ENCODE measurements at regions of chr19 and their contacts with region 1.

Region 1: DNA sequence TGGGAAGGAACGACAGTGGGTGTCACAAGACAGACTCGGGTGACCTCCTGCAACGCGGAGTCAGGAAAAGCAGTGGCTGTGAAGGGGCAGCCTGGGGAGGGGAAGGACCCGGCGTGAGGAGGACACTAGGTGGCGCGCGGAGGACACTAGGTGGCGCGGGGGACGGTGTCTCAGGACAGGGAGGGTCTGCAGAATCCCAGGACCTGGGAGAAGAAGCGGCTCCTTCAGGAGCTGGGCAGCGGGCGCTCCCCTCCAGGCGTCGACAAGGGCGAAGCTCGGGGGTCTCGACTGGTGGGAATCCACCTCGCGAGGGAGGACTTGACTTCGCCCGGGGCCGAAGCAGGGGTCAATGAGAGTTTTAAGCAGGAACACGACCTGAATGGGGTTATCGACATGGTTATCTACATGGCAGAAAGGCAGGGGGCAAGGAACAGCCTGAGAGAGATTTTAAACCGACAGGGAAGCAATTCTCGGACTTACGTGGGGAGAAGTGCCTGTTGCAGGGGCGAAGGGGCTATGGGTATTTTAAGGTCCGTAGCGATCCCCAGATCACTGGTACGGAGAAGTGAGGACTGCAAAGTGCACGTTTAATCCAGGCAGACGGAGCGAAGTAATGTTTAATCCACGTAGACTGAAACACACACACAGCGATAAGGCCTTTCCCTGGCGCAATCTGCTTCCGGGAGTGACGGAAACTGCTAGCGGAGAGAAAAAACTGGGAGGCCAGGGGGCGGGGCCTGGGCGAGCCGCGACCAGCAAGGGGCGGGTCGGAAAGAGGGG is at the start of gene ZNF616:
- DNase-seq: peak; percentile 97
- H3K4me3 ChIP-seq: peak within 1 kb of the TSS; percentile 62 to 75
- H3K27ac ChIP-seq: peak within 1 kb of the TSS; percentile 86 to 92
- H3K4me1 ChIP-seq: peaks cover 8% of the 10 kb centered on the region
- H3K27me3 ChIP-seq: no peaks in the 10 kb centered on the region
- CTCF ChIP-seq: peak; percentile 66 to 93 (median 81)
- POLR2A ChIP-seq: peak; percentile 85
- total RNA-seq, gene ZNF616: 9.1 to 13.7 TPM

Region 2: GRCh38 chr19:51777570-51778462 is 361.6 kb before region 1 on chr19:
- intact Hi-C with region 1: no loop called
- DNase-seq: peak; percentile 62
- H3K4me3 ChIP-seq: no peak overlapping the region
- H3K27ac ChIP-seq: no peak overlapping the region
- H3K4me1 ChIP-seq: no peaks in the 10 kb centered on the region
- H3K27me3 ChIP-seq: no peaks in the 10 kb centered on the region
- CTCF ChIP-seq: peak; percentile 33 to 75 (median 63)
- POLR2A ChIP-seq: no peak

Region 3: DNA sequence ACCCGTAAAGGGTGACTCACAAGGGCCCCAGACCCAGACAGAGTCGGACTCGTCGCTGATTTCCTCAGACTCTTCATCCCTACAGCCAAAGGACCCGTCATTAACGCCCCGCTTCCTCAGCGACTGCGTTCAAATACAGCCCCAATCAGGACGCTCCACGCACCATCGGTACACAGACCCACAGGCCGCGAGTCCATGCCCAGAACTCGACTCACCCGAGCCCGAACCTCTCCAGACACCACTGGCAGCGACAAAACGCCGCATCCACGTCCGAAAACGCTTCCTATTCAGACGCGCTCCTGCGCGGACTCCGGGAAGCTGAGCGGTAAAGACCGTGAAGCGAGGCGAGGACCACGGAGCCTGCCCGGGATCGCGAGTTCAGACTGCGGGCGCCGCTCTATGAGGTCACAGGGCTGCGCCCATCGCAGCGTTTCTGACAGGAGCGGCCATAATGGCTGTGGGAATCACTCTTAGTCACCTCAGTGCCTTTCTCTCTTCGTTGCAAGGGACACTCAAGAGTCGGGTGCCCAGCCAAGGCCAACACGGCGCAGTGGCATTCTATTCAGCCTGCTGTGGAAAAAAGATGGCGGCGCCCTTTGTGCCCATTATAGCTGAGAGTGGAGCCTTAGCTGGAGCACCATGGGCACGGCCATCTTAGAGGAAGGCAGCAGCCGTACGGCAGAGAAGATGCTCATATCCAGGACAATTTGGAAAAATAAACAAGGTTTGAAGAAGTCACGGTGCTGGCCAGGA is 111.2 kb before region 1 on chr19 and contains the start of gene ZNF614:
- intact Hi-C with region 1: no loop called
- DNase-seq: peak; percentile 85
- H3K4me3 ChIP-seq: peak within 1 kb of the TSS; percentile 69 to 73
- H3K27ac ChIP-seq: peak within 1 kb of the TSS; percentile 91 to 97
- H3K4me1 ChIP-seq: no peaks in the 10 kb centered on the region
- H3K27me3 ChIP-seq: no peaks in the 10 kb centered on the region
- CTCF ChIP-seq: no peak
- POLR2A ChIP-seq: peak; percentile 27
- total RNA-seq, gene ZNF614: 12.7 to 15.4 TPM

Region 4: DNA sequence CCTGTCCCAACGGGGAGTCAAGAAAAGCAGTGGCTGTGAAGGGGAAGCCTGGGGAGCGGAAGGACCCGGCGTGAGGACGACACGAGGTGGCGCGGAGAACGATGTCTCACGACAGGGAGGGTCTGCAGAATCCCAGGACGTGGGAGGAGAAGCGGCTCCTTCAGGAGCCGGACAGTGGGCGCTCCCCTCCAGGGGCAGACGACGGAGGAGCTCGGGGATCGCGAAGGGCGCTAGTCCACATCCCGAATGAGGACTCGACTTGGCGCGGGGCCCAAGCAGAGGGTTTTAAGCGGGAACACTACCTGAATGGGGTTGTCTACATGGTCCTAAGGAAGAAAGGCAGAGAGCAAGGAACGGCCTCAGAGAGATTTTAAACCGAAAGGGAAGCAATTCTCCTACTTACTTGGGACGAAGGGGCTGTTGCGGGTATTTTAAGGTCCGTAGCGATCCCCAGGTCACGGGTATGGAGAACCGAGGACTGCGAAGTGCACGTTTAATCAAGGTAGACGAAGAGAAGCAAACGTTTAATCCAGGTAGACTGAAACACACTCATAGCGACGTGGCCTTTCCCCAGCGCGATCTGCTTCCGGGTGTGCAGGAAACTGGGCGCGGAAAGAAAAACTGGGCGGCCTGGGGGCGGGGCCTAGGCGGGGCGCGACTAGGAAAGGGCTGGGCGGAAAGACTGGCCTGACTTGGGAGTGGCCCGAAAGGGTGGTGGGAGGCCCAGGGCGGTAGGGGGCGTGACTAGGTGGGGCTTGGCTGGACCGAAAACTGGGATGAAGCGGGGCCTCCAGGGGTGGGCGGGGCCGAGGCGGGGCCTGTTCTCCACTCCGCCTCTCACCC is 44.0 kb before region 1 on chr19 and contains the start of gene ZNF841:
- intact Hi-C with region 1: loop called (anchors 5 kb)
- DNase-seq: peak; percentile 90
- H3K4me3 ChIP-seq: peak within 1 kb of the TSS; percentile 65 to 73
- H3K27ac ChIP-seq: peak within 1 kb of the TSS; percentile 66 to 72
- H3K4me1 ChIP-seq: no peaks in the 10 kb centered on the region
- H3K27me3 ChIP-seq: no peaks in the 10 kb centered on the region
- CTCF ChIP-seq: no peak
- POLR2A ChIP-seq: peak; percentile 59
- total RNA-seq, gene ZNF841: 24.6 to 34.3 TPM

Region 5: DNA sequence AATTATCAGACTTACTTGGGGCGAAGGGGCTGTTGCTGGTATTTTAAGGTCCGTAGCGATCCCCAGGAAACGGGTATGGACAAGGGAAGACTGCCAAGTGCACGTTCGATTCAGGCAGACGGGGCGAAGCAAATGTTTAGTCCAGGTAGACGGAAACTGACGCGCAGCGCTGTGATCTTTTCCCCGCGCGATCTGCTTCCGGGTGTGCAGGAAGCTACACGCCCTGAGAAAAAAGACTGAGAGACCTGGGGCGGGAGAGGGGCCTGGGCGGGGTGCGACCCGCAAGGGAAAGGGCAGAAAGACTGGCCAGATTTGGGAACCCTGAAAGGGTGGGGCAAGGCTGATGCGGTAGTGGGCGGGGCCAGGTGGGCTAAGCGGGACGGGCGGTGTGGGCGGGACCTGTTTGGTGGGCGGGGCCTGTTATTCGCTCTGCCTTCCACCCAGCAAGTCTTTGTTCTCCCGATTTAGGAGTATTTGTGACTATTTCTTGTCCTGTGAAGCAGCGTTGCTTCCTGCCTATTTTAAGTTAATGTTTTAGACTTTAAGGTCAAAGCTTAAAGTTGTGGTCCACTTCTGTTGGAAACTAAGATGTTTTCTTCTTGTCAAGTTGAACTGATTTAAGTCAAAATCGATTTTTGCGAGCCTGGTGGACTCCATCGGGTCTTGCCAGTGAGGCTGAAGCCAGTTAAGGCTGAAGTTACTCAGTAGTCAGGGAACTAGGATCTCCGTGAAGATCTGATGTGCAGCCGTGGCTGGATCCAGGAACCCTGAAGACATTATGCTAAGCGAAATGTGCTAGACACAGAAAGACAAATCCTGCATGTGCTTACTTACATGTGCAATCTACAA is 32.1 kb after region 1 on chr19 and contains the start of gene ZNF836:
- intact Hi-C with region 1: loop called (anchors 2 kb)
- DNase-seq: peak; percentile 92
- H3K4me3 ChIP-seq: peak within 1 kb of the TSS; percentile 73 to 77
- H3K27ac ChIP-seq: peak within 1 kb of the TSS; percentile 86 to 90
- H3K4me1 ChIP-seq: no peaks in the 10 kb centered on the region
- H3K27me3 ChIP-seq: no peaks in the 10 kb centered on the region
- CTCF ChIP-seq: no peak
- POLR2A ChIP-seq: peak; percentile 61
- total RNA-seq, gene ZNF836: 14.1 to 19.9 TPM

Region 6: GRCh38 chr19:52237771-52238400 is 98.4 kb after region 1 on chr19:
- intact Hi-C with region 1: loop called (anchors 2 kb)
- DNase-seq: peak; percentile 48
- H3K4me3 ChIP-seq: no peak overlapping the region
- H3K27ac ChIP-seq: no peak overlapping the region
- H3K4me1 ChIP-seq: no peaks in the 10 kb centered on the region
- H3K27me3 ChIP-seq: no peaks in the 10 kb centered on the region
- CTCF ChIP-seq: peak; percentile 56 to 88 (median 81)
- POLR2A ChIP-seq: no peak

Measured in prostate gland (tissue), 2 donors.